ENCODE measurements at regions of chr10 and their contacts with region 1.

Region 1: DNA sequence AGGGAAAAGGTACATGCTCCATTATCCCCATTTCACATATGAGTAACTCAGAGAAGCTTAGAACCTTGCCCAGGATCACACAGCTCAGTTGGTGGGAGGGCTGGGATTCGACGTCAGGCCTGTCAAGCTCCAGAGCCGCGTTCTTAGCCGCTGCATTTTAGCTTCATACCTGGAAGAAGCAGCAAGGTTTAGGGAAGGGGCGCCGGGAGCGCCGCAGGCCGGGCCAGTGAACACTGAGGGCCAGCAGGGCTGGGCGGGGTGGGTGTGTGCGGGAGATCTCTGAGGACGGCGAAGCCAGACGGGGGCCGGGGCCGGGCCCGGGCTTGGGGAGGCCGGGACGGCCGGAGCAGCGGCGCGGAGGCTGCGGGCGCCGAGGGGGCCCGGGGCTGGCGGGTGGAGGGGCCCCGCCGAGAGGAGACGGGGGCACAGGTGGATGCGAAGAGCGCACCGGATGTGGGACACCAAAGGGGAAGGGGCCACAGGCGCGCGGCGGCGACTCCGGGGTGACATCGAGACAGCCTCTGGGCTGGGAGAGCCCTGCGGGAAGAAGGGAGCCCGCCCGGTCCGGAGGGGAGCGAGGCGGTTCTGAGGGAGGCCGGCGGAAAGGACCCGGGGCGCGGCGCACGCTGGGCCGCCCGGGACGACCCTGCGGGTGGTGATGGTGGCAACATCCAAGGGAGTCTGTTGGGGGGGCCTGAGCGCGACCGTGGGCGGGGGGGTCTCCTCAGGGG is 498 bp downstream of the NDST2 start:
- DNase-seq: peak; percentile 72
- ATAC-seq: peak; percentile 22
- H3K4me3 Mint-ChIP-seq: peak overlapping the region; percentile 78
- H3K27ac Mint-ChIP-seq: peak overlapping the region; percentile 91
- H3K4me1 Mint-ChIP-seq: peaks cover 42% of the 10 kb centered on the region
- H3K27me3 Mint-ChIP-seq: no peaks in the 10 kb centered on the region

Region 2: GRCh38 chr10:73379064-73379748 is 431.7 kb before region 1 on chr10:
- CTCF ChIA-PET with region 1: no interaction called
- POLR2A ChIA-PET with region 1: no interaction called
- intact Hi-C with region 1: no loop called
- DNase-seq: no peak
- ATAC-seq: peak; percentile 55
- H3K4me3 Mint-ChIP-seq: no peak overlapping the region
- H3K27ac Mint-ChIP-seq: peak overlapping the region; percentile 78
- H3K4me1 Mint-ChIP-seq: peaks cover 6% of the 10 kb centered on the region
- H3K27me3 Mint-ChIP-seq: no peaks in the 10 kb centered on the region

Region 3: DNA sequence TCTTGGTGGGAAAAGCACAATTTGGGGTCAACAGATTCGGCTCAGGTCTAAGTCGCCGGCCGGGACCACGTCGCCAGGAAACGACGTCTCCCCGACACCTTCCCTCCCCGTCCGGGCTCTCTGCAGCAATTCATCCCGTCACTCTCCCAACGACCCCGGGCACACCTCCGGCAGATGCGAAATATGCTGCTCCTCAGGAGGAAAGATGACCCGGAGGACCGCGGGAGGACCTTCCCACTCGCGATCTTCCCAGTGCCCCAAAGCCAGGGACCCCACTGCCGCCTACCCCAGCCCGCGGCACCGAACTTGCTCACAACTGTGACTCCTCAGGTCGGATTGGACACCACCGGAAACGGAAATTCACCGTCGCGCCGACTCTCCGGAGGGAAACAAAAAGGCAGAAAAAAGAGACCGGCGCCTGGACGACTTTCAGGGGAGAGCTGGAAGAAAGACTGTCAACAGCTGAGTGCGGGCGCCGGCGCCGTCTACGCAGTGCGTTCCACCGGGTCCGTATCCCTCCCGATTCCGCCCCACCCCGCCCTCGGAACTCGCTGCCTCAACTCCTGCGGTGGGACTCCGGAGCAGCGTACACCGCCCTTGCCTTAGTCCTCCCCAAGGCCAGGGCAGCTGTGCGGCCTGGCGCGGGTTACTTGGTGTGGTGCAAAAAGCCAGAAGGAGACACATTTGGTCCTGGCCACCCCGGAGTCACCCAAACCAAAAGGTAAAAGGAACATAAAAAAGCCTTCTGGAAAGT is 80.6 kb before region 1 on chr10:
- CTCF ChIA-PET with region 1: no interaction called
- POLR2A ChIA-PET with region 1: interaction called, 7 read pairs
- intact Hi-C with region 1: loop called in 1 of 2 experiments (anchors 1 kb)
- DNase-seq: peak; percentile 95
- ATAC-seq: peak; percentile 93
- H3K4me3 Mint-ChIP-seq: peak overlapping the region; percentile 98
- H3K27ac Mint-ChIP-seq: peak overlapping the region; percentile 97
- H3K4me1 Mint-ChIP-seq: peaks cover 9% of the 10 kb centered on the region
- H3K27me3 Mint-ChIP-seq: no peaks in the 10 kb centered on the region

Region 4: DNA sequence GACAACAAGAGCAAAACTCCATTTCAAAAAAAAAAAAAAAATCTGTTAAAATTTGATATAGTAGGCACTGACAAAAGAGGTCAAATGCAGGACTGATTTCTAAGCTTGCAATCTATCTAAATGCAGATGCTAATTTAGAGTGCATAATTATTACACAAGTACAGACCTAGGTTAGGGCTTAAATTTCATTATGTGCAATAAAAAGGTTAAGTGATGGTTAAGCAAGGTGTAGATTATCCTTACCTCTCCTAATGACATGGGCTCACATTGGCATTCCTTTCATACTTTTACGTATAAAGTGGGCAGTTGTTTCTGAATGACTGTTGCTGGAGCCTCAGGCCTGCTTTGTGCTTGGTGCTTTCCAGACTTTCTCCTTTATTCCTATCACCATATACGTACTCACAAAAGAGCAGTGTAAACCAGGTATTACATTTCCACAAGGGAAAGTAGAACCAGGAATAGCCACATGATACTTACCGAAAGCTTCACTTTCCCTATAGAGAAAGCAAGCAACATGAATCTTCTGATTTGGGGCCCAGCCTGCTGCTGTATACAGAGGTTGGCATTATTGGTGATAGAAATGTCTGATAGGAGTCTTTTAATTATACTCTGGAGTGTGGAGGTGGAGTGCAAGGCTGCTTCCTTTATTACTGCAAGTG is 31.2 kb before region 1 on chr10:
- CTCF ChIA-PET with region 1: interaction called, 3 read pairs
- POLR2A ChIA-PET with region 1: interaction called, 10 read pairs
- intact Hi-C with region 1: loop called in 1 of 2 experiments (anchors 5 kb)
- DNase-seq: no peak
- ATAC-seq: no peak
- H3K4me3 Mint-ChIP-seq: peak overlapping the region; percentile 82
- H3K27ac Mint-ChIP-seq: peak overlapping the region; percentile 33
- H3K4me1 Mint-ChIP-seq: peaks cover 54% of the 10 kb centered on the region
- H3K27me3 Mint-ChIP-seq: no peaks in the 10 kb centered on the region

Region 5: DNA sequence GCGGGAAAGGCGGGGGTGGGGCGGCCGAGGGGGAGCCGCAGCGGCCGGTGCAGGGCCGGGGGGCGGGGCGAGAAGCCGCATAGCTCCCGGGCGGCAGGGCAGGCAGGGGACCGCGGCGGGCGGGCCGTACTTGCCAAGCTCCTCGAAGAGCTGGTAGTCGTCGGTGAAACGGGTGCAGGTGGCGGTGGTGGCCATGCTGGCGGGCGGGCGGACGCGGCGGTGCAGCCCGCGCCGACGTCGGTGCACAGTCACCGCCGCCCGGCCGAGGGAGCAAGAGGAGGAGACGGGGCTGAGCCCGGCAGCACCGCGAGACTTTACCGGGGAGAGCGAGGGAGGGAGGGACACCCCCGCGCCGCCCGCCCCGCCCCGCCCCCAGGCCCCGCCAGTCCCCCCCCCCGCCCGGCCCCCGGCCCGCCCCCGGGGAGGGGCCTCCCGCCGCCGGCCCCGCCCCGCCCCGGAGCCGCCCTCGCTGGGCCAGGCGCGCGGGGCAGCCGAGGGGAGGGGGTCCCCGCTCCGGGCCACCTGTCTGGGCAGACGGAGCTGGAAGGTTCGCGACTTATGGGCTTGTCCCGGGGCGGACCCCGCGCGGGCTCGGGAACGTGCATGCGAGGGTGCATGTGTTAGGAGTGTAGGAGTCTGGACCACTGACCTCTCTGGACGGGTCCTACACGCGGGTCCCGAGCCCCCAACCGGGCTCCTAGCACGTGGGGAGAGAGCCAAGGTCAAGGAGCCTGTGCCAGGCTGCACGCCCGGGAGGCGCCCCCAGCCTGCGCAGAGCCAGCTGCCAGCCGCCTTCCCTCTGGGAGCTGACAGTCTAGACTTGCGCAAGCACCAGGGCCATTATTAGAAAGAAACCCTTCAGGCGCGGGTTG is 63.6 kb after region 1 on chr10 and contains the start of gene CAMK2G:
- CTCF ChIA-PET with region 1: interaction called, 7 read pairs
- POLR2A ChIA-PET with region 1: interaction called, 3 read pairs
- intact Hi-C with region 1: loop called (anchors 1 to 2 kb)
- DNase-seq: peak; percentile 92
- ATAC-seq: peak; percentile 87
- H3K4me3 Mint-ChIP-seq: peak within 1 kb of the TSS; percentile 74
- H3K27ac Mint-ChIP-seq: peak within 1 kb of the TSS; percentile 81
- H3K4me1 Mint-ChIP-seq: peaks cover 67% of the 10 kb centered on the region
- H3K27me3 Mint-ChIP-seq: no peaks in the 10 kb centered on the region
- total RNA-seq, gene CAMK2G: 16.4 to 19.4 TPM

Region 6: GRCh38 chr10:73997787-73998622 is 187.1 kb after region 1 on chr10 and contains the start of gene VCL:
- CTCF ChIA-PET with region 1: interaction called, 3 read pairs
- POLR2A ChIA-PET with region 1: no interaction called
- intact Hi-C with region 1: loop called in 1 of 2 experiments (anchors 1 kb)
- DNase-seq: peak; percentile 97
- ATAC-seq: peak; percentile 98
- H3K4me3 Mint-ChIP-seq: peak within 1 kb of the TSS; percentile 89
- H3K27ac Mint-ChIP-seq: peak within 1 kb of the TSS; percentile 97
- H3K4me1 Mint-ChIP-seq: peaks cover 39% of the 10 kb centered on the region
- H3K27me3 Mint-ChIP-seq: no peaks in the 10 kb centered on the region
- total RNA-seq, gene VCL: 20.7 to 22.7 TPM

Region 7: GRCh38 chr10:75111367-75111906 is 1300.5 kb after region 1 on chr10 and contains the start of gene SAMD8:
- CTCF ChIA-PET with region 1: no interaction called
- POLR2A ChIA-PET with region 1: no interaction called
- intact Hi-C with region 1: loop called in 1 of 2 experiments (anchors 2 kb)
- DNase-seq: peak; percentile 99
- ATAC-seq: peak; percentile 90
- H3K4me3 Mint-ChIP-seq: peak within 1 kb of the TSS; percentile 99
- H3K27ac Mint-ChIP-seq: peak within 1 kb of the TSS; percentile 99
- H3K4me1 Mint-ChIP-seq: peaks cover 51% of the 10 kb centered on the region
- H3K27me3 Mint-ChIP-seq: no peaks in the 10 kb centered on the region
- total RNA-seq, gene SAMD8: 20.5 to 20.9 TPM

Measured in activated CD4-positive, alpha-beta T cell treated with anti-CD3 and anti-CD28 coated beads for 36 hours (primary cell).